Adrenal gland (tissue), 19 donors: ENCODE measurements at regions of chr15 and their contacts with region 1.

Region 1: GRCh38 chr15:33756961-33757360 is 211.3 kb upstream of the CHRM5 start:
- DNase-seq: no peak
- H3K4me3 ChIP-seq: no peak overlapping the region
- H3K27ac ChIP-seq: no peak overlapping the region
- H3K4me1 ChIP-seq: no peaks in the 10 kb centered on the region
- H3K27me3 ChIP-seq: no peaks in the 10 kb centered on the region
- CTCF ChIP-seq: no peak
- POLR2A ChIP-seq: no peak

Region 2: DNA sequence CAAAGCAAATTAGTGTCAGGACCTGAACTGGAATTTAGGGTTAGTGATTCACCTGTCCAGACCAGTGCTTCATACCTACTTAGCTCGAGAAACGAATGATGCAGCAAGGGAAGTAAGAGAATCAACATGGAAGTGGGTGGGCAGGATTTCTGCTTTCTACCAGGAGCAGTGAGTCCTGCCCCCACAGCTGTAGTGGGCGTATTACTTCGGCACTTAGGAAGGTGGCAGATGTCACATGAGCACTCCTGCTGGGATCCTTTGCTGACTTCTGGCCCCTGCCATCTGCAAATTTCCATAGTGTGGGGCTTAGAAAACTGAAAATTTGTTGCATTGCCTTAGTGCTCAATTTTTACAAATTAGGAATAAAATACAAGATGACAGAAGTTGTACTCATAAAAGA is 415.0 kb before region 1 on chr15:
- intact Hi-C with region 1: no loop called
- DNase-seq: no peak
- H3K4me3 ChIP-seq: no peak overlapping the region
- H3K27ac ChIP-seq: no peak overlapping the region
- H3K4me1 ChIP-seq: no peaks in the 10 kb centered on the region
- H3K27me3 ChIP-seq: no peaks in the 10 kb centered on the region
- CTCF ChIP-seq: no peak
- POLR2A ChIP-seq: no peak

Region 3: DNA sequence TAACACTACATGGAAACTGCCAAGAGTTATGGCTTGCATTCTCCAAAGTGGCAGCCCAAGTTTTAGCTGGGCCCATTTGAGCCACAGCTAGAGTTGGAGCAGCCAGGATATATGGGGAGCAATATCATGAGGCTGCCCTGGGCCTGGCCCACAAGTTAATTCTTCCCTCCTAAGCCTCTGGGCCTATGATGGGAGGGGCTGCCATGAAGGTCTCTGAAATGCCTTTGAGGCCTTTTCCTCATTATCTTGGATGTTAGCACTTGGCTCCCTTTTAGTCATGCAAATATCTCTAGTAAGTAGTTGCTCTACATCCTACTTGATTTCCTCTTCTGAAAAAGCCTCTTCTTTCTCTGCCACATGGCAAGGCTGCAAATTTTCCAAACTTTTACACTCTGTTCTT is 46.2 kb before region 1 on chr15:
- intact Hi-C with region 1: no loop called
- DNase-seq: no peak
- H3K4me3 ChIP-seq: no peak overlapping the region
- H3K27ac ChIP-seq: no peak overlapping the region
- H3K4me1 ChIP-seq: no peaks in the 10 kb centered on the region
- H3K27me3 ChIP-seq: no peaks in the 10 kb centered on the region
- CTCF ChIP-seq: no peak
- POLR2A ChIP-seq: no peak

Region 4: DNA sequence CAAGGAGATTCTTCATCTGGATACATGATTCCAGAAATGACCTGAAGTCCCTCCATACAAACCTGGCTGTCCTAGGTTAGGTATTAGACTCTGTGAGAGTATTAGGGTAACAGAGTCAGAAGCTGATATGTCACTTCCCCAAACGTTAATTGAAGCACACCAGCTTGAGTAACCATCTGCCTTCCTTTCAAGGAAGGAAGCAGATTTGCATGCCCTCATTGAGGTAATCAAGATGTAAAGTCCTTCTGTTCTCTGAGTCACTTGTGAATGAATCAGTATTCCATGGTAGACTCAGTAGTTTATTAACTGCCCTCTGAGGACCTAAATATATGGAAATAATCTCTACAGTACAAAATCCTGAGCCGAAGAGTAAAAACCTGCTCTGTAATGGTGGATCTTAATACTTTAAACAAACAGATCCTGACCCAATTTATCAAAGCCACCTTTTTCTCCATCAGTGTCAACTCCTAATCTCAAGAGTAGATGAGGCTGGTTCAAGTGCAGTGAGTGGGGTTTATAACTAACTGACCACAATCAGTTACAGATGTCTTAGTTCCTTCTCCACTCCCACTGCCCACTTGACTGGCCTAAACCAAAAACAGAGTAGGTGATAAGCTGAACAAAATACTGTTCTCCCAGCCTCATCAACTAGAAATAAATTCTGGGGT is 34.8 kb before region 1 on chr15:
- intact Hi-C with region 1: loop called in 1 of 2 experiments (anchors 2 kb)
- DNase-seq: no peak
- H3K4me3 ChIP-seq: no peak overlapping the region
- H3K27ac ChIP-seq: no peak overlapping the region
- H3K4me1 ChIP-seq: no peaks in the 10 kb centered on the region
- H3K27me3 ChIP-seq: no peaks in the 10 kb centered on the region
- CTCF ChIP-seq: no peak
- POLR2A ChIP-seq: no peak